Psoas muscle (tissue), 8 donors: ENCODE measurements at regions of chr10 and their contacts with region 1.

Region 1: DNA sequence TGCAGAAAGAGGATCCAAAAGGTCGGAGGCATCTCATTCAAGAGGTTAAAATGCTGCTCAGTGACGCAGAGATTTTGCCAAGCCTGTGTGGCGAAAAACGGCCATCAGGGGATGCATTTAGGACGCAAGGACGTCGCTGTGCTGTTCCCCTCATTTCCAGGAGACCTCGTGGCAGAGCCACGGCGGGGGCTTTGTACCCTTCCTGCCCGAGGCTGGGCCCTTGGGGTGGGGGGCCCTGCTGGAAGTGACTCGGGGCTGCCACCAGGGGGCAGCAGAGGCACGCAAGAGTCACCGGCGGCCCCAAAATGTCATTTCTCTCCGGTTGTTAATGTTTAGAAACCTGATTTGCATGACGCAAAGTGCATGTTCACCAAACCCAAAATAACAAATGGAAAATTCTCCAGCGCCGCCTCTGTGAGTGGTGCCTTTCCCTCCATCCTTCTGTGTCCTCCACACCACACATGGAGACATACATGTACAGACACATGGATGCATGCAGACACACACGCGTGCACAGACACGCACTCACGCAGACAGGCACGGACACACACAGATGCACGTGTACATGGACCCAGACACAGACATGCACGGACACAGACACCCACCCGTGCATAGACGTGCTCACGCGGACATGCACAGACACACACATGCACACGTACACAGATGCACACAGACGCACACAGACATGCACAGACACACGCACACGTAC is 51.0 kb upstream of the NKX6-2 start:
- DNase-seq: peak in 1 of 2 donors; percentile 75
- ATAC-seq: peak; percentile 71 to 83 (median 74)
- H3K4me3 ChIP-seq: peak overlapping the region; percentile 67
- H3K27ac ChIP-seq: peak overlapping the region; percentile 93
- H3K4me1 ChIP-seq: no peaks in the 10 kb centered on the region
- H3K27me3 ChIP-seq: peaks cover 0 to 16% (median 9%) of the 10 kb centered on the region in 3 donors
- CTCF ChIP-seq: peak; percentile 98

Region 2: DNA sequence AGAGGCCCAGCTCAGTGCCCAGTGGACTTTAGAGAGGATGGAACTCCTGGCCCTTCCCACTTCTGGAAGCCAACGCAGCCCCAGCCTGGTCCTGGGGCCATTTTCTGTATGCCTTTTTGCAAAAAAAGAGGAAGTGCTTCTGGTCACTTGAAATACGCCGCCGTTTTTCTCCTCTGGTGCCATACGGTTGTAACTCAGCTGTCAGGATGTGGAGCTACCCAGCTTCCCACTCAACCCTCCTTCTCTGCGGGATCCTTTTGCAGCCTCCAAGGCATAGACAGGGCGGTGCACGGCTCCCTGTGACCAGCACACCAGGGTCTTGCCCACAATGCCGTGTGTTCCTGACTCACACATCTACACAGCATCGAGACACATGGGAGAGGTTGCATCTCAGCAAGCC is 1895.1 kb before region 1 on chr10:
- intact Hi-C with region 1: no loop called
- DNase-seq: no peak
- ATAC-seq: no peak
- H3K4me3 ChIP-seq: no peak overlapping the region
- H3K27ac ChIP-seq: no peak overlapping the region
- H3K4me1 ChIP-seq: no peaks in the 10 kb centered on the region
- H3K27me3 ChIP-seq: peaks cover 0 to 3% (median 0%) of the 10 kb centered on the region in 3 donors
- CTCF ChIP-seq: no peak

Region 3: GRCh38 chr10:133067149-133068105 is 230.4 kb after region 1 on chr10:
- intact Hi-C with region 1: no loop called
- DNase-seq: no peak
- ATAC-seq: no peak
- H3K4me3 ChIP-seq: no peak overlapping the region
- H3K27ac ChIP-seq: no peak overlapping the region
- H3K4me1 ChIP-seq: no peaks in the 10 kb centered on the region
- H3K27me3 ChIP-seq: peaks cover 0 to 26% (median 8%) of the 10 kb centered on the region in 3 donors
- CTCF ChIP-seq: no peak

Region 4: DNA sequence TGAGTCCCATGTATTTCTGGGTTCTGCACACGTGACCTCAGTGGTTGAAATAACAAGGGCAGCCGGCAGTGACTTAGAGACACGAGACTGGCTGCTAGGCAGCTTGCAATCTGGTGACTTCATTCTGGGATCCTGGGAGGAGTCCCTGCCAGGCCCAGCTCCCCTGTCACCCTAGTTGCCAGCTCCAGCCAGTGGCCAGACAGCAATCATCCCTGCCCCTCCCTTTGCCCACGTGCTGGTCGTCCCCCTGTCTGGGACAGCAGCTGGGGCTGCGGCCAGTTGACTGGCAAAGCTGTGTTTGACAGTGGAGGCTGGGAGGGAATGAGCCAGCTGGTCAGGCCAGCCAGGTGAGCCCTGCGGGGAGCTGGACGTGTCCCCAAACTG is 280.7 kb after region 1 on chr10:
- intact Hi-C with region 1: loop called (anchors 2 to 5 kb)
- DNase-seq: peak; percentile 81 to 92
- ATAC-seq: peak; percentile 93 to 96 (median 94)
- H3K4me3 ChIP-seq: no peak overlapping the region
- H3K27ac ChIP-seq: peak overlapping the region; percentile 81
- H3K4me1 ChIP-seq: peaks cover 7% of the 10 kb centered on the region
- H3K27me3 ChIP-seq: no peaks in the 10 kb centered on the region
- CTCF ChIP-seq: no peak

Region 5: GRCh38 chr10:133124357-133125211 is 287.6 kb after region 1 on chr10:
- intact Hi-C with region 1: loop called (anchors 2 to 5 kb)
- DNase-seq: peak; percentile 27 to 72
- ATAC-seq: peak; percentile 83 to 96 (median 92)
- H3K4me3 ChIP-seq: no peak overlapping the region
- H3K27ac ChIP-seq: no peak overlapping the region
- H3K4me1 ChIP-seq: no peaks in the 10 kb centered on the region
- H3K27me3 ChIP-seq: peaks cover 0 to 3% (median 2%) of the 10 kb centered on the region in 3 donors
- CTCF ChIP-seq: peak; percentile 85

Region 6: DNA sequence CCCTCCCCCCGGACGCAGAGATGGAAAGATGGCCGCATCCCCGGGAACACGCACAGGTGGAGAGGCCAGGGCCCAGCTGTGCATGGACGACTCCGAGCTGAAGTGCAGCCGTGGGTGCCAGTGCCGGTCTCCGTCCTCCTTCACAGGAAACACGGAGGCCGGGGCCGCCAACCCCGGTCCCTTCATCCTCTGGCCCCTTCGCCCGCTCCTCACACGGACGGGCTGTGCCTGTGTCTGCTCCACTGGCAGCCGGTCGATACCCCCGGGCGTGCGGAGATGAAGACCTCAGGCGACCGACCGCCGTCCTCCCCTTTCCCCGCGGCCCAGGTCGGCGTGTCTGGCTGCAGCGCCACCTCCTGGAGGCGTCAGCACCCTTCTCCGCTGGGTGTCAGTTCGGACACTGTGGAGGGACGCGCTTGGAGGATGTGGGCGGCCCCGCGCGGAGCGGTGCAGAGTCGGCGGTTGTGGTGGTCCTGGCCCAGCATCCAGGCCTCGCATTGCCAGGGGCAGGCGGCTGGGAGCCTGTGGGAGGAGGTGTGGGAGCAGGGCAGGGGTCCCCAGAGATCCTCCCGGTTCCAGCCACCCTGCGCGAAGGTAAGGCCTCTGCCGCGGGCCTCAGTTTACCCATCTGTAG is 481.6 kb after region 1 on chr10:
- intact Hi-C with region 1: loop called in 1 of 2 experiments (anchors 10 kb)
- DNase-seq: peak; percentile 56 to 72
- ATAC-seq: peak; percentile 63 to 81 (median 80)
- H3K4me3 ChIP-seq: peak overlapping the region; percentile 50
- H3K27ac ChIP-seq: no peak overlapping the region
- H3K4me1 ChIP-seq: peaks cover 5% of the 10 kb centered on the region
- H3K27me3 ChIP-seq: peaks cover 0 to 30% (median 10%) of the 10 kb centered on the region in 3 donors
- CTCF ChIP-seq: peak; percentile 53